AG04449 (cell line): ENCODE measurements at regions of chr10 and their contacts with region 1.

Region 1: DNA sequence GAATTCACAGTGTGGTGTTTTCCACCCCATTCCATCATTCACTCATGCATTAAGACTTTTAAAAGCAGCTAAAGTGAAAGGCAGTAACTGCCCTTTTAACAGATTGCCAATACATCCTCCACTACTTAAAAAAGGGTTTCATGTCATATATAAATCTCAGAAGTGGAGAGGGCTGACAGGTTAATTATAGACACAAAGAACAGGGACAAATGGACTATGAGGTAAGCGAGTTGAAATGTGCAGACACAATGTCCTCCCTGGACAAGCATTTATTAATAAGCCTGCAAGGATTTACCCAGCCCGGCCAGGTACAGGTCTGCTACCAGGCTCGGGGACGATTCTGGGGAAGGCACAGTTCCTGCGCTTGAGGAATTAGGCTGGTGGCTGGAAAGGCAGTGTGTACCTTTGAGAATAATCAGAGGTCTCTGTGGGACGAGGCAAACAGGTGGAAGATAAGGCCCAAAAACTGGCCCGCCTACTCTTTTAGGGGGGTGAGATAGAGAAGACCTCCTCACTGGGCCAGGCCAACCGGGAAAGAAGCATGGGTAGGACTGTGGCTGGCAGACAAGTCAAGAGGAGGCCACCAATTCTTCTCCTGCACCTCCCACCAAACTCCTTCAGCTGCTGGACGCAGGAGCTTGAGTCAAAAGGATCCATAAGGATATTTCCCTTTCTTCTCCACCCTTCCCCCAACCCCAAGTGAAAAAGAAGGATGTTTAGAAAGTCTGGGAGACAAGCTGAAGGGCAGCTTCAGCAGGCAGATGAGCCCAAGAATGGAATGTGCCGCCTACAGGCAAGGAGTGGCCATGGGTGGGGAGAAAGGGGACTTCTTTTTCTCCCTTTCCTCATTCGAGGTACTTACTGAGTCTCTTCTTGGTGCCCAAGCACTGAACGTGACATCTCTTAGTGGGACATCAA is 1.5 kb downstream of the PDLIM1 start:
- DNase-seq: no peak
- H3K4me3 ChIP-seq: peak overlapping the region; percentile 89
- CTCF ChIP-seq: no peak

Region 2: DNA sequence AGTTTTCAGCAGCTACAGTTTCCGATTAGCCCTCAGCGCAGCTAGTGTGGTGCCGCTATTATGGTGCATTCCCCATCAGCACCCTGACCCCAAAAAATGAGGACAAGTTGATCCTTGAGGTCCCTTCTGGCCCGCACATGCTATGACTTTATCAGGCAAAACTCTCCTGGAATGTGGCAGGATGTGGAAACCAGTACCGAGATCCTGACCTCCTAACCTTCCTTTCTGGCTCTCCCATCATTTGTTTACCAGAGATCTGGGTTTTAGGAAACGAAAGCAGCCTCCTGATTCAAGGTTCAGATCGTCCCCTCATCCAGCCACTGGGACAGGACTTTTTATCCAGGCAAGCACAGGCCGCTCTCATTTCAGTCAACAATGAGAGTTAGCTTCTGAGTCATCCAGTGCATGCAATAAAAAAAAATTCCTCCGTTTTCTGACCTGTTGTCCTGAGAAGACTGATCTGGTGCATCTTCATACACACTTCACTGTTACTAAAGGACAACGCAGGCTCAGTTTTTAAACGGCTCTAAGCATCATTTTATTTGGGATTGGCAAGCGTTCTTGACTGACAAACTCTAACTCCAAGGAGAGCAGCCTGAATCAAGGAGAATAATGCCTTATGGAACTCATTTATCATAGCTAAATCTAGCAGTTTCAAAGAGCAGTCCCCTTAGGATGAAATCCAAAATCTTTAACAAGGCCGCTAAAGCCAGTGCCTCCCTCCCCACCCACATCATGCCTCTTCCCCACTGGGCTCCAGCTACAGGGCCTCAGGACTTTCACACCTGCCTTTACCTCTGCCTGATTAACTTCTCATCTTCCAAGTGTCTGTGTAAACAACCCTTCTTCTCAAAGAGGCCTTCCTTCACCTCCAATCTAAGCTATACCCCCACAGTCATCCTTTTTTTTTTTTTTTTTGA is 15.6 kb before region 1 on chr10:
- CTCF ChIA-PET with region 1: interaction called, 10 read pairs
- POLR2A ChIA-PET with region 1: no interaction called
- DNase-seq: no peak
- H3K4me3 ChIP-seq: peak overlapping the region; percentile 28; the same call in 1 of the 2 replicates
- CTCF ChIP-seq: no peak

Region 3: GRCh38 chr10:95300022-95300539 is 10.8 kb after region 1 on chr10:
- CTCF ChIA-PET with region 1: no interaction called
- POLR2A ChIA-PET with region 1: no interaction called
- DNase-seq: no peak
- H3K4me3 ChIP-seq: no peak overlapping the region
- CTCF ChIP-seq: no peak

Region 4: DNA sequence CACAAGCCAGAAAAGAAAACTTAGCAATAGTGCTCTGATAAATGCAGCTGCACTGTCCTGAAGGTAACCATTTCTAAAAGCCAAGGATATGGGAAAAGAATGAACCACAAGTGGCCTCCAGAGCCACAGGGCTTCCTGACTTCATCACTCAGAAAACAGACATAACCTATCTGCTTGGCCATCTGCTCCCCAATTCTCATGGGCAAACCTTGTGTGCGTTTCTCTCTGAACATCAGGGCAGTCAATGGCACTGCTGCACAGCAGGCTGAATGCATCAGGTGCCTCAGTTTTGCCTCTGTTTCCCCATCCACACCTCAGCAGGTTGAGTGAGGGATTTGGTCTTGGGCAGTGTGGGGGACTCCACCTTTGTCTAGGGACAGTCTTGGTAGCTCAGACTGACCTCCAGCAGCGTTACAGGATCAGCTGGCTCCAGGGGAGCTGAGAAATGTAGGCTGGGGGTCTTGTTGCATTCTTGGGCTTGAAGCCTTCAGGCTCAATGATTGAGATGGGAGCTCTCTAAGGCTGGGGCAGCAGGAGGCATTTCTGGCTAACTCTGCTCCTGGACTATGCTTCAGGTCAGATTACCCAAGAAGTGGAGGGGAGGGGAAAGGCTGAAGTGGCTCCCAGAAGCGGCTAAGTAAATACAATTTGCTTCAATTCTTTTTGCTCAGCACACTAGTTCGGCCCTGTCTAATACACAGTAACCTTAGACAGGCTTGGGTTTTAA is 25.1 kb after region 1 on chr10:
- CTCF ChIA-PET with region 1: no interaction called
- POLR2A ChIA-PET with region 1: no interaction called
- DNase-seq: no peak
- H3K4me3 ChIP-seq: no peak overlapping the region
- CTCF ChIP-seq: no peak